CD8-positive, alpha-beta T cell (primary cell): ENCODE measurements at regions of chr5 and their contacts with region 1.

Region 1: GRCh38 chr5:41856644-41857491 is 13.4 kb downstream of the OXCT1 start:
- DNase-seq: peak in 8 of 9 experiments; percentile 23 to 84 (median 53)
- ATAC-seq: peak; percentile 89
- H3K4me3 ChIP-seq: no peak overlapping the region
- H3K4me3 Mint-ChIP-seq: no peak overlapping the region
- H3K27ac ChIP-seq: no peak overlapping the region
- H3K27ac Mint-ChIP-seq: no peak overlapping the region
- H3K4me1 ChIP-seq: no peaks in the 10 kb centered on the region
- H3K4me1 Mint-ChIP-seq: peaks cover 5% of the 10 kb centered on the region
- H3K27me3 ChIP-seq: no peaks in the 10 kb centered on the region
- H3K27me3 Mint-ChIP-seq: no peaks in the 10 kb centered on the region
- CTCF ChIP-seq: peak; percentile 72

Region 2: DNA sequence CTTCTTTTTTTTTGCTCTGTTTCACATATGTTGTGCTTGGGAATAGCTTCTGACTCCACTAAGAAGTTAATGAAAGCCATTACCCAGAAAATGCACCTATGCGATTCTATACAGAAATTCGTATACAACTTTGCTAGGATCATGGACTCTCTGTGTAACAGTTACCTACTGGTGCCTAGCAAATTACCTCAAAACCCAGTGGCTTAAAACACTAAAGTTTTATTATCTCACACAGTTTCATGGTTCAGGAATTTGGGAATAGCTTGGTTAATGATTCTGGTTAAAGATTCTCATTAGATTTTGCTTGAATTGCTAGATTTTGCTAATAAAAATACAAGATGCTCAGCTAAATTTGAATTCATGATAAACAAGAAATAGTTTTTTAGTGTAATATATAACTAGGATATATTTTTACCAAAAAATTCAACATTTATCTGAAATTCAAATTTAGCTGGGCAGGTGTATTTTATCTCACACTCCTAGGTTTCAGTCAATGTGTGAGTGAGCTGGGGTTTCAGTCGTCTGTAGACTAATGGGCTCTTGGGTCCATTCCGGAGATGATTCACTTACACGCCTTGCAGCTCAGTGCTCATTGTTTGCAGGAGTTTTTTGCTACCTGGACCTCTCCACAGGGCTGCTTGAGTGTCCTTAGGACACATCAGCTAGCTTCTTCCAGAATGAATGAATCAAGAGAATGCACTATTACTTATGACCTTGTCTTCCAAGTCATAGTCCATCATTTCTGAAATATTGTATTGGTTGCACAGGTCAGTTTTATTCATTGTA is 860.9 kb before region 1 on chr5:
- CTCF ChIA-PET with region 1: no interaction called
- POLR2A ChIA-PET with region 1: no interaction called
- intact Hi-C with region 1: no loop called
- DNase-seq: no peak
- ATAC-seq: no peak
- H3K4me3 ChIP-seq: no peak overlapping the region
- H3K4me3 Mint-ChIP-seq: no peak overlapping the region
- H3K27ac ChIP-seq: no peak overlapping the region
- H3K27ac Mint-ChIP-seq: no peak overlapping the region
- H3K4me1 ChIP-seq: no peaks in the 10 kb centered on the region
- H3K4me1 Mint-ChIP-seq: no peaks in the 10 kb centered on the region
- H3K27me3 ChIP-seq: no peaks in the 10 kb centered on the region
- H3K27me3 Mint-ChIP-seq: peaks cover 11% of the 10 kb centered on the region
- CTCF ChIP-seq: no peak

Region 3: DNA sequence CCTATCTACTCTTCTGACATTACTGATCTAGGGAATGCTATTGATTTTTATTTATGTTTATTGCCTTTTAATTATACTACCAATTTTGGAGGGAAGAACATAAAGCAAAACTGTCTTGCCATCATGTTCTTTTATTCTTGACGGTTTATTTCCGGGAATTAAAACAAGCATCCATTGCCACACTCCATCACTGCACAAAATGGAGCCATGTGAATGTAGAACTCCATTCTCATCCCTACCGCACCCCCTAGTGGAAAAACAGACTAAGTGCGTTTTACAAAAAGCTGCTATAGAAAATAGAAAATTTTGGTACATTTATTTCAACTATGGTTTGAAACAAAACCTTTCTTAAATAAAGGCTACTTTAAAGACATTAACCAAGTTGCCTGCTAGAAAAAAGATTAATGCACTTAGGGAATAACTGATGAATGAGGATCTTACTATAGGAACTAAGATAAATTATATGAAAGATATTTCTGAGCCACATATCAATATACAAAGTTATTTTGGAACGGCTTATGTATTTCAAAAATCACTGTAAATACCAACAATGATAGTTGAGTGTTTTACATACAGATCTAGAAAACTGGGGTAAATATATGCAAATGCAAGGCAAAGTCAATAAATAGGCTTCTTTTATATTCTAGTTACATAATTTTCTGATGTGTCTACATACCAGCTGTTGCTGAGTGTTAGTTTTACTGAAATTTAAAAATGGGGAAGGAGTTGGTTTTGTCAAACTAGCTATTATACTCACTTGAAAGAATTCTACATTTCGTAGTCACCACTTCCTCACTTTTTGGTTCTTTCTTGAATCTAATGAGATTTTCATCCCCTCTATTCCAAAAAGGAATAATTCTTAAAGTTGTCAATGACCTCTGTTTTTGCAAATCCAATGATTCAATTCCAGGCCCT is 13.2 kb before region 1 on chr5:
- CTCF ChIA-PET with region 1: interaction called, 11 read pairs
- POLR2A ChIA-PET with region 1: no interaction called
- intact Hi-C with region 1: no loop called
- DNase-seq: peak in 4 of 9 experiments; percentile 12 to 60 (median 34)
- ATAC-seq: peak; percentile 71
- H3K4me3 ChIP-seq: no peak overlapping the region
- H3K4me3 Mint-ChIP-seq: no peak overlapping the region
- H3K27ac ChIP-seq: no peak overlapping the region
- H3K27ac Mint-ChIP-seq: no peak overlapping the region
- H3K4me1 ChIP-seq: no peaks in the 10 kb centered on the region
- H3K4me1 Mint-ChIP-seq: no peaks in the 10 kb centered on the region
- H3K27me3 ChIP-seq: no peaks in the 10 kb centered on the region
- H3K27me3 Mint-ChIP-seq: no peaks in the 10 kb centered on the region
- CTCF ChIP-seq: peak; percentile 71

Region 4: GRCh38 chr5:41924872-41925554 is 68.1 kb after region 1 on chr5 and contains the start of gene FBXO4:
- CTCF ChIA-PET with region 1: interaction called, 11 read pairs
- POLR2A ChIA-PET with region 1: interaction called, 4 read pairs
- intact Hi-C with region 1: loop called (anchors 1 kb)
- DNase-seq: peak; percentile 79 to 96 (median 88)
- ATAC-seq: peak; percentile 96
- H3K4me3 ChIP-seq: peak within 1 kb of the TSS; percentile 79 to 87
- H3K4me3 Mint-ChIP-seq: peak within 1 kb of the TSS; percentile 87
- H3K27ac ChIP-seq: peak within 1 kb of the TSS; percentile 91 to 98
- H3K27ac Mint-ChIP-seq: peak within 1 kb of the TSS; percentile 99
- H3K4me1 ChIP-seq: peaks cover 16% of the 10 kb centered on the region
- H3K4me1 Mint-ChIP-seq: peaks cover 28% of the 10 kb centered on the region
- H3K27me3 ChIP-seq: no peaks in the 10 kb centered on the region
- H3K27me3 Mint-ChIP-seq: no peaks in the 10 kb centered on the region
- CTCF ChIP-seq: peak; percentile 57
- total RNA-seq, gene FBXO4: 4.4 to 4.7 TPM

Region 5: GRCh38 chr5:42057254-42057690 is 200.4 kb after region 1 on chr5:
- CTCF ChIA-PET with region 1: interaction called, 118 read pairs
- POLR2A ChIA-PET with region 1: interaction called, 5 read pairs
- intact Hi-C with region 1: loop called (anchors 1 kb)
- DNase-seq: peak; percentile 26 to 69 (median 53)
- ATAC-seq: peak; percentile 84
- H3K4me3 ChIP-seq: no peak overlapping the region
- H3K4me3 Mint-ChIP-seq: no peak overlapping the region
- H3K27ac ChIP-seq: no peak overlapping the region
- H3K27ac Mint-ChIP-seq: no peak overlapping the region
- H3K4me1 ChIP-seq: no peaks in the 10 kb centered on the region
- H3K4me1 Mint-ChIP-seq: no peaks in the 10 kb centered on the region
- H3K27me3 ChIP-seq: no peaks in the 10 kb centered on the region
- H3K27me3 Mint-ChIP-seq: peaks cover 10% of the 10 kb centered on the region
- CTCF ChIP-seq: peak; percentile 64

Region 6: DNA sequence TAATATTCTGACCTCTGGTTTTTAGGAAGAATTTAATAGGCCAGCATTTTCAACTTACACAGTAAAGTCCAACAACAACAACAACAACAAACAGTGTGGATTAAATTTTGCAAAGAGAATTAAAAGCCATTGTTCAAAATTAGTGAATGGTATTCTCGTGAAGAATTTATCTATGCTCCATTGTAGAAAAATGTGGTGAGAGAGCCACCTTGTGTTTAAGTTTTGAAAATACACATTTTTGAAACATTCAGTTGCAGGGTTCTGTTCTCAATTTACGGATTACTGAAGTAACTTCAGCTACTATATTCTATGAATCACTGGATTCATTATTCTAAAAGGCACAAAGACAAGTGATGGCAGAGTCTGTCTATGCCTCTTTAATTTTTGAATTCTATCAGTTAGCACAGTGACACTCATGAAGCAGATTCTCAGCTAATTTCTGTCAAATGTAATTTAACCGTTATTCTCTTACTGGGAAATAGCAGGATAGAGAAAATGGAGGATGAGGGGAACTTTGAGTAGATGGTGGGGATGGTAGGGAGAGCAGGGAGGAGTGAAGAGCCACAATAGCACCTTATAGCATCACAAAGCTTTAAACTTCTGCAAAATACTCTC is 910.7 kb after region 1 on chr5:
- CTCF ChIA-PET with region 1: no interaction called
- POLR2A ChIA-PET with region 1: no interaction called
- intact Hi-C with region 1: loop called (anchors 2 kb)
- DNase-seq: peak in 2 of 9 experiments; percentile 36 to 41
- ATAC-seq: no peak
- H3K4me3 ChIP-seq: no peak overlapping the region
- H3K4me3 Mint-ChIP-seq: no peak overlapping the region
- H3K27ac ChIP-seq: no peak overlapping the region
- H3K27ac Mint-ChIP-seq: no peak overlapping the region
- H3K4me1 ChIP-seq: no peaks in the 10 kb centered on the region
- H3K4me1 Mint-ChIP-seq: no peaks in the 10 kb centered on the region
- H3K27me3 ChIP-seq: no peaks in the 10 kb centered on the region
- H3K27me3 Mint-ChIP-seq: peaks cover 8% of the 10 kb centered on the region
- CTCF ChIP-seq: peak; percentile 60

Region 7: DNA sequence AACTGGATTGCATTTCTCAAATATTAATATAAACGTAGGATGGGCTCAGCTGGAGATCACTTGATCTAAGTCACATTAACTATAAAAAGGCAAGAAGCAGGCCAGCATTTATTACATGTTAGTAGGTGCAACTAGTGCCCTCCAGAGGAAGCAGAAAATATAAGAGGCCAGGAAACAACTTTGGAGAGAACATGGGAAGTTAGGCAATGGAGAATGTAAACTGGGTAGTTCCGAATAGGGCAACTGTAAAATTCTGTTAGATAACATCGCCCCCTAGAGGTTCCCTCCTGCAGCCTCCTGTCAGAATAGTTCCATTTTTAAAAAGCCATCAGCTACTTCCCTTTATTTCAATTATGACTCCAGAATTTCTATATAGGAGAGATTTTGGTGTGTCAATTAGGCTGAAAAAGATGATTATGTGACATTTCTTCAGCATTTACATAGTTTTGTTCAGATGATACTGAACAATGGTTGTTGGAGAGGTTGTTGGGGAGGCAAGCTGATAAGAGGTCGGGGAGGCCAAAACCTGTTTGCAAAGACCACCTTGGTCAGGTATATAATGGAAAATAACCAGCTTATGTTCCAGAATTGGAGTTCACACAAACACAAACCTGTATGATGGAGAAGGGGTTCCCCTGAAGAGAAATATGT is 1532.9 kb after region 1 on chr5:
- CTCF ChIA-PET with region 1: interaction called, 3 read pairs
- POLR2A ChIA-PET with region 1: no interaction called
- intact Hi-C with region 1: loop called in 1 of 2 experiments (anchors 10 kb)
- DNase-seq: peak in 7 of 9 experiments; percentile 11 to 73 (median 43)
- ATAC-seq: peak; percentile 64
- H3K4me3 ChIP-seq: no peak overlapping the region
- H3K4me3 Mint-ChIP-seq: no peak overlapping the region
- H3K27ac ChIP-seq: no peak overlapping the region
- H3K27ac Mint-ChIP-seq: no peak overlapping the region
- H3K4me1 ChIP-seq: no peaks in the 10 kb centered on the region
- H3K4me1 Mint-ChIP-seq: peaks cover 35% of the 10 kb centered on the region
- H3K27me3 ChIP-seq: no peaks in the 10 kb centered on the region
- H3K27me3 Mint-ChIP-seq: no peaks in the 10 kb centered on the region
- CTCF ChIP-seq: peak; percentile 87